ENCODE measurements at regions of chr9 and their contacts with region 1.

Region 1: GRCh38 chr9:107425101-107426045 is 64.2 kb downstream of the KLF4 start:
- H3K4me3 ChIP-seq: no peak overlapping the region
- H3K27ac ChIP-seq: no peak overlapping the region
- H3K4me1 ChIP-seq: 0 out of 2 replicates have a peak, but pooled peaks cover 2% of the 10 kb centered on the region
- CTCF ChIP-seq: 0 out of 2 replicates have a peak, but pooled peaks have one; percentile 22

Region 2: DNA sequence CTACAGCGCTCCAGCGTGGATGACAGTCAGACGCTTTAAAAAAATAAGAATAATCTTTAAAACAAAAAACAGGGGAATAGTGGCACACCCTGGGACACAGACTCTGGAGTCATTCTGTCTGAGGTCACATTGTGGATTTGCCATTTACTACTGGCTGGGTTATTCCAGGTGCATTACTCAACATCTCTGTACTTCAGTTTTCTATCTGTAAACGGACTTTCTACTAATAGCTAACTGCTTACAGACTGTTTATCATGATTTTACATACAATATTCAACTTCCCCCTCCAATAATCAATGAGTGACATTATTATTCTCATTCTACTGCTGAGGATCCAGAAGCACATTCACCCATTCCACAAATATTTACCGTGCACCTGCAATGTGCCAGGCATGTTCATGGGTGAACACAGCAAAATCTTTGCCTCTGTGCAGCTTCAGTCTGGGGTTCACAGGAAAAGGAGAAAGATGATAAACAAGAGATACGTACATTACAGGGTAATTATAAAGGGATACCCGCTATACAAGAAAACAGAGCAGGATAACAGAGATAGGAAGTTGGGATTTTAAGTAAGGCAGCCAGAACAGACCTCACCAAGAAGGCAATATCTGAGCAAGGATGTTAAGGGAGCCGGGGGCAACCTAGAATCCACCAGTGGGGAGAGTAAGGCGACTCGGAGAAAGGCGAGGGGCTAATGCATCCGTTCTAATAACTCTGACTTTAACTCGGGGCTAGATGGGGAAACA is 143.3 kb before region 1 on chr9:
- CTCF ChIA-PET with region 1: no interaction called
- POLR2A ChIA-PET with region 1: no interaction called
- H3K4me3 ChIP-seq: peak overlapping the region; percentile 48
- H3K27ac ChIP-seq: no peak overlapping the region
- H3K4me1 ChIP-seq: no peaks in the 10 kb centered on the region; the same call in 1 of the 2 replicates
- CTCF ChIP-seq: no peak

Region 3: DNA sequence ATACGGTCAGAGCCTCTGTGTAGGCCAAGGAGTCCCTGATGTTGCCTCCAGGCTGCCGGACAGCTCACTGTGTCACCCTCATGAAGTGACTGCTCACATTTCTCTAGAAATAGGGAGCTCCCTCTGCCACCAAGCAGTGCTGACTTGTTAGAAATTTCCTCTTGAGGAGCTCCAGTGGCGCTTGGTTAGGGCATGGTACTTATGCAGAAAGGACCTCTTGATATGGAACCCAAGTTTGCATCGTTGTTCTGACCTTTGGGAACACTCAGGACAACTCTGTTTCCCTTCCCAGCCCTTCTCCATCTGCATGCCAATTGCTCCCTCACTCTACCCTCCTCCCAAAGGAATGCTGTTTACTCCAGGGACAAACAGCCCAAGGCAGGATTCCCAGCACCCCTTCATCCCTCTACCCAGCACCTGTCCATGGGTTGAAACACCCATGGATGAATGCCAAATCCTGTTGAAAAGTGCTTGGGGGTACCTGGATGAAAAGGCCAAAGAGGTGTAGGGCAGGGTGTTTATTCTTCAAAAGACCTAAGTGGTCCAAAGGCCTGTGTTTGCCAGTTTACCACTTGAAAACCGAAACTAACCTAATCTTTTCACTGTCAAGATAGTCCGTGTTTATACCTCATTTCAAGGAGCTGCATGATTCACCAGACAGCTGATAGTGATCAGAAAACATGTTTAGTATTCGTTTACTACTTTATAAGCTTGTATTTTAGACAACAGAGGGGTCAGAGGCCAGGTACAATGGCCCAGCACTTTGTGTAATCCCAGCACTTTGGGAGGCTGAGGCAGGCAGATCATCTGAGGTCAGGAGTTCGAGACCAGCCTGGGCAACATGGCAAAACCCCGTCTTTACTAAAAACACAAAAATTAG is 13.1 kb after region 1 on chr9:
- CTCF ChIA-PET with region 1: interaction called, 20 read pairs
- POLR2A ChIA-PET with region 1: no interaction called
- H3K4me3 ChIP-seq: no peak overlapping the region
- H3K27ac ChIP-seq: no peak overlapping the region
- H3K4me1 ChIP-seq: no peaks in the 10 kb centered on the region
- CTCF ChIP-seq: no peak

Region 4: GRCh38 chr9:107465467-107466451 is 40.4 kb after region 1 on chr9:
- CTCF ChIA-PET with region 1: interaction called, 10 read pairs
- POLR2A ChIA-PET with region 1: no interaction called
- H3K4me3 ChIP-seq: peak overlapping the region; percentile 17
- H3K27ac ChIP-seq: no peak overlapping the region
- H3K4me1 ChIP-seq: no peaks in the 10 kb centered on the region
- CTCF ChIP-seq: no peak

Region 5: GRCh38 chr9:108272349-108272899 is 847.1 kb after region 1 on chr9:
- CTCF ChIA-PET with region 1: interaction called, 16 read pairs
- POLR2A ChIA-PET with region 1: no interaction called
- H3K4me3 ChIP-seq: peak overlapping the region; percentile 27
- H3K27ac ChIP-seq: peak overlapping the region; percentile 58
- H3K4me1 ChIP-seq: peaks cover 12% of the 10 kb centered on the region
- CTCF ChIP-seq: peak; percentile 54; the same call in 1 of the 2 replicates